WTC11 (cell line): ENCODE measurements at regions of chr5 and their contacts with region 1.

Region 1: GRCh38 chr5:150523472-150524350 is 15.8 kb downstream of the NDST1 start:
- DNase-seq: peak; percentile 48
- ATAC-seq: peak; percentile 74
- H3K4me3 Mint-ChIP-seq: no peak overlapping the region
- H3K27ac Mint-ChIP-seq: peak overlapping the region; percentile 96
- H3K4me1 Mint-ChIP-seq: peaks cover 46% of the 10 kb centered on the region
- H3K27me3 Mint-ChIP-seq: no peaks in the 10 kb centered on the region
- CTCF ChIP-seq: 0 out of 2 replicates have a peak, but pooled peaks have one; percentile 12

Region 2: DNA sequence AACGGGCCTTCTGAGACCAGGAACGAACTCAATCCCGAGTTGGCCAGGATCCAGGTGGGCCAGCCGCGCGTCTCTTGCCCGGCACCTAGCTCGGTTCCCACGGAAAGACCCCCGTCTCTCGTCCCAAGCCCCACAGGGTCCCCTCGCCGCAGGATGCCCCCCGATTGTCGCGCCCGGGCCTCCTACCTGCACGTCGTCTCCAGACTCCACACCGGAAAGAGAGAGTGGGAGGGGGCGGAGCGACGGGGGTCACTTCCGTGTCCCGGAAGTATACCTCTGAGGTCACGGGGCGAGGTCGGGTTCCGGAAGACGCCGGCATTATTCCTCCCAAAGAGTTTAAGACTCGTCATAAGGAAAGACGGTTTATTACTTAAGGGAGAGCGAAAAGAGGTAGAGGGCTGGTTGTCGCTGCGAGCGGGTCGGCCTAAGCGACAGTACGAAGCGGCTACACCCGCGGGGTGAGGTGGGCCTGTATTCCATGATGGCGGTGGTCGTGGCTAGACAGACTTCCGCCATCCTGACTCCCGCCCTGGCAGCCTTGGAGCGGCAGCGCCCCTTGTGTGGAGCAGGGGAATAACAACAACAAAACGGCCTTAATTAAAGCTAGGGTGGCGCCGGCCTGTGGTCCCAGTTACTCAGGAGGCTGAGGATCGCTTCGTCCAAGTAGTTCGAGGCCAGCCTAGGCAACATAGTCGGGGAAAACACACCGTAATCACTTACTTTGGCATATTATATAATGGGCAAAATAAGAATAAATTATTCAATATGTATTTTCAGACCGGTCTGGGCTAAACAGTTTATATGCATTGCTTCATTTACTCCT is 74.0 kb before region 1 on chr5 and contains the start of gene RPS14:
- CTCF ChIA-PET with region 1: interaction called, 13 read pairs
- POLR2A ChIA-PET with region 1: interaction called, 3 read pairs
- DNase-seq: peak; percentile 90
- ATAC-seq: peak; percentile 86
- H3K4me3 Mint-ChIP-seq: peak within 1 kb of the TSS; percentile 100
- H3K27ac Mint-ChIP-seq: peak within 1 kb of the TSS; percentile 99
- H3K4me1 Mint-ChIP-seq: peaks cover 30% of the 10 kb centered on the region
- H3K27me3 Mint-ChIP-seq: no peaks in the 10 kb centered on the region; the same call in 1 of the 2 replicates
- CTCF ChIP-seq: peak; percentile 92
- total RNA-seq, gene RPS14: 2,564 to 2,814 TPM (median 2,812 TPM) in 3 replicates

Region 3: GRCh38 chr5:150458819-150459557 is 64.7 kb before region 1 on chr5:
- CTCF ChIA-PET with region 1: interaction called, 53 read pairs
- POLR2A ChIA-PET with region 1: no interaction called
- DNase-seq: peak; percentile 91
- ATAC-seq: peak; percentile 67
- H3K4me3 Mint-ChIP-seq: peak overlapping the region; percentile 15; the same call in 1 of the 2 replicates
- H3K27ac Mint-ChIP-seq: no peak overlapping the region
- H3K4me1 Mint-ChIP-seq: peaks cover 43% of the 10 kb centered on the region
- H3K27me3 Mint-ChIP-seq: no peaks in the 10 kb centered on the region
- CTCF ChIP-seq: peak; percentile 87

Region 4: DNA sequence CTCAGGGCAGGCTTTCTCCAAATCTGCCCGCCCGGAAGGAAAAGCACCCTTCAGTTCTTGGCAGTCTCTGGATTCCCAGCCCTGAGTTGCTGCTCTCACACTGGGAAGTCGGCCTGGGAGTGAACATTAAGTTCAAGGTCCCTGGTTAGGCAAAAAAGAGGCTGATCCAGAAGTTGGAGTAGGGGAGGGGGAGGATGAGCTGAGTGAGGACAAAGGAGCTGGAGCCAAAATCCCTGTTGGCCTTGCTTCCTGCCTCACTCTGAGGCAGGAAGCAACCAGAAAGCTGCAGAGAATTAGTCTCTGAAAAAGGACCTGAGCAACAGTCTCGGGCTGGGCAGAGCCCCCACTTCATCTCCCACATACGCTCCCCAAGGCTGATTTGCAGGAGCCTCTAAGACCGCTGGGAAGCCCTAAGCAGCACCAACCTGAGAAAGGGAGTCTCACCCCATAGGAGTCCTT is 59.1 kb before region 1 on chr5:
- CTCF ChIA-PET with region 1: interaction called, 53 read pairs
- POLR2A ChIA-PET with region 1: no interaction called
- DNase-seq: no peak
- ATAC-seq: peak; percentile 66
- H3K4me3 Mint-ChIP-seq: no peak overlapping the region
- H3K27ac Mint-ChIP-seq: peak overlapping the region; percentile 68; the same call in 1 of the 2 replicates
- H3K4me1 Mint-ChIP-seq: peaks cover 45% of the 10 kb centered on the region
- H3K27me3 Mint-ChIP-seq: no peaks in the 10 kb centered on the region
- CTCF ChIP-seq: no peak

Region 5: DNA sequence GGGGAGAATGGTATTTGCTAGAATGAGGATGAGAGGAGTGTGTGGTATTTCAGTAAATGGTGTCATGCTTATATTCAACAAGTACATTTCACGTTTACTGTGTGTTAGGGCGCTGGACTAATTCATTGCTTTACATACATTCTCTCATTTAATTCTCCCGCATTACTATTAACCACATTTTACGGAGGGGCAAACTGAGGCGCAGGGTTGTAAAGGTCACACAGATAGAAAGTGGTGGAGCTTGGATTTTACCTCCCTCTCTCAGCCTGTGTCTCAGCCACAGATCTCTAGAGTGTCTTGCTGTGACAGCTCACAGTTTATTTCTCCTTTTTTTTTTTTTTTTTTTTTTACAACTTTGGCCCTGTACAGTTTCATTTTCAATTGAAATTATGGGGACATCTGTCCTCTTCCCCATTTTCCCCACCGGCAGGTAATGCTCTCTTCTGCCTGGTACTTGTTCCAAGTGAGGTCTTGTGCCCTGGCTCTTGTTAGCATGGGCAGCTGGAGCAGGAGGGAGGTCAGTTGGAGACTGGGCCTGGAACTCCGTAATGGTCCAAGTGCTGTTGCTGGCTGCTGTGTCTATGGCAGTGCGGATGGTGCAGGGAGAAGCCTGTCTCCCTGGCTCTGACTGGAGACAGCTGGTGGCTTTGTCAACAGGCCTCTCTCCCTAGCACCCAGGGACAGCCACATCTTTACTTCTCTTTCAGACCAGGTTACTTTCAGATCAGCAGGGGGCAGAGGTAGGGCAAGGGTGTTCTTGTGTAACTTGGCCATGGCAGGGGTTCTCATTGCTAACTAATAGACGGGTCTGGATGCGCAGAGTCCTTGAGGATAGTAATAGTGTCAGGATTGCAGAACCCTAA is 36.3 kb before region 1 on chr5:
- CTCF ChIA-PET with region 1: interaction called, 24 read pairs
- POLR2A ChIA-PET with region 1: no interaction called
- DNase-seq: no peak
- ATAC-seq: no peak
- H3K4me3 Mint-ChIP-seq: peak overlapping the region; percentile 70
- H3K27ac Mint-ChIP-seq: peak overlapping the region; percentile 55
- H3K4me1 Mint-ChIP-seq: peaks cover 70% of the 10 kb centered on the region
- H3K27me3 Mint-ChIP-seq: no peaks in the 10 kb centered on the region
- CTCF ChIP-seq: no peak

Region 6: DNA sequence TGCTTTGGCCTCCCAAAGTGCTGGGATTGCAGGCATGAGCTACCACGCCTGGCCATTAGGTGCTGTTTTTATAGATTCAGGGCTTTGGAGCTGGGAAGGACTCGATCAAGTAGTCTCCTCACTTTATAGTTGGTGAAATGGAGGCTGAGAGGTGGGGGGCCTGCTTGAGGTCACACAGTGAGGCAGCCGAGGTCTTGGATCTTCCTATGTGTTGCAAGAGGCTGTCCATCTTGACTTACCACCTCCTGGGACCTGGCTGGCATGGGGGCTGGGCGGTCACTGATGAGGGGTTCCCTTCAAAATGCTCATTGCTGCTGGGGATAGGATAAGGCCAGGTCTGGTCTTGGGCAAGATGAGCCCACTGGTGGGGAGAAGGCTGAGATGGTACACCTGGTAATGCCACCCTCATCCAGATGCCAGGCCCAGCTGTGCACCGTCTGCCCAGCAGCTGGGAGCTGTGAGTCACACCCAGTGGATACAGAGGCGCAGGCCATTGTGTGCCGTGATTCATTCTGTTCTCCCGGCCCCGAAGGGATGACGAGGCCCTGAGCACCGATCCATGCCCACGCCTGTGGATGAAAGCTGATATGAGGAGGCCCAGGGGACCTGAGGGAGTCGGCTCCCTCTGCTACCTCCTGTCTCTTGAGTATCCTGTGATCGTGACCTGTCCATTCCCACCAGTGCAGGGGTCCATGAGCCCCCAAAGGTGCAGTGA is 26.3 kb before region 1 on chr5:
- CTCF ChIA-PET with region 1: interaction called, 24 read pairs
- POLR2A ChIA-PET with region 1: no interaction called
- DNase-seq: no peak
- ATAC-seq: no peak
- H3K4me3 Mint-ChIP-seq: no peak overlapping the region
- H3K27ac Mint-ChIP-seq: peak overlapping the region; percentile 92
- H3K4me1 Mint-ChIP-seq: peaks cover 64% of the 10 kb centered on the region
- H3K27me3 Mint-ChIP-seq: no peaks in the 10 kb centered on the region
- CTCF ChIP-seq: no peak

Region 7: GRCh38 chr5:150511578-150512367 is 11.9 kb before region 1 on chr5:
- CTCF ChIA-PET with region 1: interaction called, 22 read pairs
- POLR2A ChIA-PET with region 1: no interaction called
- DNase-seq: peak; percentile 64
- ATAC-seq: peak; percentile 43
- H3K4me3 Mint-ChIP-seq: peak overlapping the region; percentile 29; the same call in 1 of the 2 replicates
- H3K27ac Mint-ChIP-seq: peak overlapping the region; percentile 79
- H3K4me1 Mint-ChIP-seq: peaks cover 61% of the 10 kb centered on the region
- H3K27me3 Mint-ChIP-seq: no peaks in the 10 kb centered on the region
- CTCF ChIP-seq: no peak

Region 8: DNA sequence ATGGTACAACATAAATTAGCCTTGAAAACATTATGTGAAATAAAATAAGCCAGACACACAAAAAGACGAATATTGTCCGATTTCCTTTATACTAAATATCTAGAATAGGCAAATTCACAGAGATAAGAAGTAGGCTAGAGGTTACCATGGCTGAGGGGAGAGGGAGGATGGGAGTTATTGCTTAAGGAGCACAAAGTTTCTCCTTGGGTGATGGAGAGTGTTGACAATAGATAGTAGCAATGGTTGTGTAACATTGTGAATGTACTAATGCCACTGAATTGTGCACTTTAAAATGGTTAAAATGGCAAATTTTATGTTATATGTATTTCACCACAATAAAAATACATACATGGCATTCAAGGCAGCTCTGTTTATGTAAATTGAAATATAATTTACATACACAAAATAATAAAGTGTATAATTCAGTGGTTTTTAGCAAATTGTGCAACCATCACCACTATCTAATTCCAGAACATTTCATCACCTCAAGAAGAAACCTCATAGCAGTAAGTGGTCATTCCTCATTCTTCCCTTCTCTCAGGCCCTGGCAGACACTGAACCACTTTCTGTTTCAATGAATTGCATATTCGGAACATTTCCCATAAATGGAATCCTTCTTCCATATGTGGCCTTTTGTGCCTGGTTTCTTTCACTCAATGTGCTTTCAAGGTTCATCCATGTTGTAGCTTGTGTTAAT is 43.5 kb after region 1 on chr5:
- CTCF ChIA-PET with region 1: no interaction called
- POLR2A ChIA-PET with region 1: no interaction called
- DNase-seq: no peak
- ATAC-seq: no peak
- H3K4me3 Mint-ChIP-seq: no peak overlapping the region
- H3K27ac Mint-ChIP-seq: no peak overlapping the region
- H3K4me1 Mint-ChIP-seq: no peaks in the 10 kb centered on the region
- H3K27me3 Mint-ChIP-seq: no peaks in the 10 kb centered on the region
- CTCF ChIP-seq: no peak